PC-9 (cell line): ENCODE measurements at regions of chr11 and their contacts with region 1.

Region 1: GRCh38 chr11:73070653-73071052 is 71.5 kb downstream of the FCHSD2 start:
- DNase-seq: no peak
- H3K4me3 ChIP-seq: no peak overlapping the region
- H3K27ac ChIP-seq: no peak overlapping the region
- H3K4me1 ChIP-seq: peaks cover 25% of the 10 kb centered on the region
- H3K27me3 ChIP-seq: no peaks in the 10 kb centered on the region
- CTCF ChIP-seq: no peak

Region 2: GRCh38 chr11:73085189-73085875 is 14.7 kb after region 1 on chr11:
- CTCF ChIA-PET with region 1: no interaction called
- POLR2A ChIA-PET with region 1: interaction called, 10 read pairs
- intact Hi-C with region 1: no loop called
- DNase-seq: no peak
- H3K4me3 ChIP-seq: no peak overlapping the region
- H3K27ac ChIP-seq: no peak overlapping the region
- H3K4me1 ChIP-seq: no peaks in the 10 kb centered on the region
- H3K27me3 ChIP-seq: no peaks in the 10 kb centered on the region
- CTCF ChIP-seq: no peak

Region 3: DNA sequence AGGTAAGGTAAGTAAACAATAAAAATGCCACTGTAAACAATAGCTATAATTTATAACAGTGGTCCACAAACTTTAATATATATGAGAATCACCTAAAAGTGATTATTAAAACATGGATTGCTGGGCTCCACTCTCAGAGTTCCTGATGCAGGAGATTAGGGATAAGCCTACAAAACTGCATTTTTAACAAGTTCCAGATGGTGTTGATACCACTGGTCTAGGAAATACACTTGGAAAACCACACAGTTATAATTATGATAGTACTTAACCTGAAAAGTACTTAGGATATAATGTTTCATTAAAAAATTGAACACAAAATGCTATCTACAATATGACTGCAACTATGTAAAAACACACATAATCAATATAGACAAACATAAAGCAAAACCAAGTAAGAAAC is 51.0 kb after region 1 on chr11:
- CTCF ChIA-PET with region 1: no interaction called
- POLR2A ChIA-PET with region 1: no interaction called
- intact Hi-C with region 1: no loop called
- DNase-seq: no peak
- H3K4me3 ChIP-seq: no peak overlapping the region
- H3K27ac ChIP-seq: no peak overlapping the region
- H3K4me1 ChIP-seq: no peaks in the 10 kb centered on the region
- H3K27me3 ChIP-seq: no peaks in the 10 kb centered on the region
- CTCF ChIP-seq: no peak